ENCODE measurements at regions of chr15 and their contacts with region 1.

Region 1: DNA sequence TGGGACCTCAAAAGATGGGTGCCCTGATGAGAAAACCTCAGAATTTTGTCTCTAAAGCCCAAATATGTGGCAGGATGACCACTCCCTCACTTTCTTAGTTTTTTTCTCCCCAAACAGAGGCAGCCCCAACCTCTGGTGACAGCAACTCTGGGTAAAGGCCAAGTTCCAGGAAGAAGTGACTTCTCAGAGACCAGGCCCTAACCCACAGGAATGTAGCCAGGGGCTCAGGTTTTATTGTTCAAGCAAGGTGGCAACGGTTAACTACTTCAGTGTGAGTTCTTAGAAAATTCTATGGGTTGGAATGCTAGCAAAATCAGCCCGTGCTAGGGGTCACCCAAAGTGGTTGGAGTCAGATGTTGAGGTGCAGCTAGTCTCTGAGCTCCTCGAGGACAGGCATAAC is 5.1 kb upstream of the DNAJA4 start:
- DNase-seq: no peak
- H3K4me3 ChIP-seq: no peak overlapping the region
- CTCF ChIP-seq: no peak

Region 2: DNA sequence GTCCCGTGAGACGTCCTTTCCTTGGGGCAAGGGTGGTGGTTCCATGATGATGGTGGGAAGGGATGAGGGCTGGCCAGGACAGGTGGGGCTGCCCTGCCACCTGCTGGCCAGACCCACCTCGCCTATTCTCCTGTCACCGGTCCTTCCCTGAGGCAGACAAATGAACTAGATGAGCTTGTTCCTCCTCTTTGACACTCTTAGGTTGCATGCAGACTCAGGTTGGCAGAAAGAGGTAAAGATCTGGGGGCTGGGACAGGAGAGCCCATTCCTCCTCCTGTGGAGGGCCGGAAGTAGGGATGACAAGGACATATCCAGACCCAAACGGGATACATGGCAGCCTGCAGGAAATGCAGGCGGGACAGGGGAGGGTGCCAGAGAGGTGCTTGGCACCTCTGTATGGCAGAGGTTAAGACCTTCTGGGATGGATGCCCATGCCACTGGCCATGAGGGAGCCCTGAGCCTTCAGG is 63.5 kb before region 1 on chr15:
- in situ Hi-C with region 1: loop called (anchors 5 kb)
- DNase-seq: no peak
- H3K4me3 ChIP-seq: no peak overlapping the region
- CTCF ChIP-seq: peak; percentile 68

Region 3: DNA sequence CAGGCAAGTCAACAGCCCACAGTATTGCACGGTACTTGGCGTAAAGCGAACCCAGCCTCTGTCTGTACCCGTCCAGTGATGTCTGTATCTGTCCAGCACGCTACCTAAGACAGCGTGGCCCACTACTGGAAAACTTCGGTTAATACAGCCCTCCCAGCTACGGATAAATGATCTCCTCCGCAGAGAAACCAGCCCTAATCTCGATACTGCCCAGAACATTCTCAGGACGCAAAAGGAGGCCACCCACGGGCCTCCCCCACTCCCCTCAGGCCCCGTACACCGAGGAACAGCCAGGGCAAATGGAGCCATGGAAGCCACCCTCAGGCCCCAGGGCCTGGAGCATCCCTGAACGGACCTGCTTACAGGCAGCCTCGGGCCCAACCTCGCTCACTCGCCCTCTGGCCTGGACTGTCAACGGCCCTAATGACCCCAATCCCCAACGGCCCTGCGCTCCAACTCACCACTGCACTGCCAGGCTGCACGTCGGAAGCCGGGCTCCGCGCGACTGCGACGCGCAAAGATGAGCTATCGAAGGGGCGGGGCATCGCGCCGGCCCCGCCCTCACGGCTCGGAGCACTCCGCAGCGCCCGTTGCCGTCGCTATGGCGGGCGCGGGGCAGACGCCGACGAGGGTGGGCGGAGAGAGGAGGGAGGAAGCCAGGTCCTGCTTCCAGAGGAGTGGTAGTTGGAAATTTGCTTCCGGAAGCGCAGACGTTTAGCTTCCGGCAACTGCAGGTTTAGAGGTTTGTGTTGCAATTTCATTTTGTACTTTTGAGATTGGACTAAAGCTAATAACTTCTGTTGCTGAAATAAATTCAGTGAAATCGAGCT is 40.1 kb after region 1 on chr15 and contains the start of gene SKIC8:
- in situ Hi-C with region 1: no loop called
- DNase-seq: peak; percentile 68
- H3K4me3 ChIP-seq: peak within 1 kb of the TSS; percentile 89
- CTCF ChIP-seq: no peak